ENCODE measurements at regions of chr19 and their contacts with region 1.

Region 1: DNA sequence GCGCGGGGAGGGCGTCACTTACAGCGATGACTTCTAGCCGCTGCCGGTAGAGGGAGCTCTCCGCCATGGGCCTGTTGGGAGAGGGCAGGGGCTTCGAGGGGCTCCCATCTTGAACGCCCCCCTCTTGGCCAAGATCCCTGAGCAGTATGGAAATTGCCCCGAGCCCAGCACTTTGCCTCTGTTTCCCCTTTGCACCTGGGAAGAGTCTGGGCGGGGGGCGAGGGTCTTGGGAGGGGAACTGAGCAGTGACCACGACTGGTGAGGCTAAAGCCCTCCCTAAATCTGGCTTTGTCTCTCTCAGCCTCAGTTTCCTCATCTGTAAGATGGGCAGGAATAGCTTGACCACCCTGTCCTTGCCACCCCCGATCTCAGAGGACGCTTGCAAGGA is 2.8 kb downstream of the PALM3 start:
- DNase-seq: peak; percentile 67
- ATAC-seq: no peak
- H3K4me3 Mint-ChIP-seq: no peak overlapping the region
- H3K27ac Mint-ChIP-seq: no peak overlapping the region
- H3K4me1 Mint-ChIP-seq: peaks cover 14% of the 10 kb centered on the region
- H3K27me3 Mint-ChIP-seq: peaks cover 46% of the 10 kb centered on the region

Region 2: GRCh38 chr19:13872695-13873389 is 186.2 kb before region 1 on chr19:
- CTCF ChIA-PET with region 1: interaction called, 13 read pairs
- POLR2A ChIA-PET with region 1: no interaction called
- DNase-seq: peak; percentile 64
- ATAC-seq: peak; percentile 95
- H3K4me3 Mint-ChIP-seq: peak overlapping the region; percentile 62
- H3K27ac Mint-ChIP-seq: no peak overlapping the region
- H3K4me1 Mint-ChIP-seq: peaks cover 11% of the 10 kb centered on the region
- H3K27me3 Mint-ChIP-seq: peaks cover 5% of the 10 kb centered on the region

Region 3: DNA sequence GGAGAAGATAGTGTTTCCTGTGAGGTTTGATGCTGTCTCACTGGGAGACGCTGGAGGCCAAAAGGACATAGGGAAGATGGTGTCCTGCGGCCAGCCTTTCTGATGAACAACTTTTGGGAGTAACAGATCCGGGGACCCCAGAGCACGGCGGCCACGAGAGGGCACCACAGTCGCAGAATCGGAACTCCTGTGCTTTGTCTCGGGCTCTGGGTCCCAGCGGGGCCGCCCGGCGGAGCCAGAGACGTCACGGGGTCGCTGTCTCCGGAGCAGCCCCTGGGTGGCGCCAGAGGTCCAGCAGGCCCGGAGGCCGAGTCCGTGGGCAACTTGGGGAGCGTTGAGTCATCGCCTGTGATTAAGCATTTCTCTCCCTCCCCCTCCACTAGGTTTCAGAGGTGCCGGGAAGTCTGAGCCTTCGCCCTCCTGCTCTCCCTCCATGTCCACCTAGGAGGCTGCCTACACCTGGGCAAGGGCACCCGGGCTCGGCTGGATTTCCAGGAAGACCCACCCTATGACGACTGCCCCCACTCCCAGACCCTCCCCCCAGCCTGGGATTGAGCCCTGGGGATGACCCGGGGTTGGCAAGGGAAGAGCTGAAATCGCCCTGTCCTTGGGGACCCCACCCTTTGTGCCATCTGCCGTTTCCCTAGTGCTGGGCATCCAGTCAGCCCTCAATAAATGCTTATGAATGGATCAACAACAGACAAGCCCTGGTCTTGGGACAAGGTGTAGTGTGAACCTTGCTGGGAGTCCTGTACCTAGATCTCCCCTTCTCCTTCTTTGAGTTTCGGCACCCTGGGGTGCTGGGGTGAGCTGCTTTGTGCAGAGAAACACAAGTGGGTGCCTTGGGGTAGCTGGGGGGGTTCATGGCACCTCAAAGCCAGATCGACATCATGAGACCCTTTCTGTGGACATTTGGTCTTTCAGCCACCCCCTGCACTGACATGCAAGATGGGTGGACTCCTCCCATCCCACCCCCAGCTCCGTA is 178.7 kb before region 1 on chr19:
- CTCF ChIA-PET with region 1: interaction called, 24 read pairs
- POLR2A ChIA-PET with region 1: no interaction called
- DNase-seq: peak; percentile 99
- ATAC-seq: peak; percentile 96
- H3K4me3 Mint-ChIP-seq: peak overlapping the region; percentile 54
- H3K27ac Mint-ChIP-seq: peak overlapping the region; percentile 64
- H3K4me1 Mint-ChIP-seq: peaks cover 45% of the 10 kb centered on the region
- H3K27me3 Mint-ChIP-seq: peaks cover 8% of the 10 kb centered on the region

Region 4: DNA sequence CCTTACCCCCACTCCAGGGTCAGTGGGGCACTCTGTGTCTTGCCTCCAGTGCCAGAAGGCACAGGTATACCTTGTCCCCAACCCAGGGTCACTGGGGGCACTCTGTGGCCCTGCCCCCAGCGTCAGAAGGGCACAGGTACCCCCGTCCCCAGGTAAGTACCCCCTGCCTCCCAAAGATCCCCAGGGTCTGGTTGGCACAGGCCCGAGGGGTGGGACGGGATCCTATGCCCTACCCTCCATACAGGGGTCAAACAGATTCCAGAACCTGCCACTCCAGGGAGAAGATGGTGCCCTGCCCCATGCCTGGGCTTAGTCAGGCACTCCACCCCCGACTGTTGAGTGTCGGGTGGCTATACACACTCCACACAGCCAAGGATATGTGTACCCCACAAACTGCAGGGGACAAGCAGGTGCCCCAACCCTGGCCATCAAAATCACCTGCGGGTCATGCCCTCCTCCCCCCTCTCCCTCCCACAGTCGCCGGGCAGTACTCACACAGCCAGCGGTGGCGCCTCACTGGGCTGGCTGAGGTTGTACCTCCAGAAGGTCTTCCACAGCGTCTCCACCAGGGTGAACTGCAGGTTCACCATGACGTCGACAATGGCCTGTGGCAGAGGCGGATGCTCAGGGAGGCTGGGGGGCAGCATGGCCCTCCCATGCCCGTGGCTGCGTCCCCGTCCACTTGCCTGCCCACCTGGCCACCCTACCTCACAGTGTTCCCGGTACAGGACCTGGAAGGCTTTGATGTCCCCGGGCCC is 93.0 kb before region 1 on chr19:
- CTCF ChIA-PET with region 1: no interaction called
- POLR2A ChIA-PET with region 1: no interaction called
- DNase-seq: no peak
- ATAC-seq: no peak
- H3K4me3 Mint-ChIP-seq: no peak overlapping the region
- H3K27ac Mint-ChIP-seq: no peak overlapping the region
- H3K4me1 Mint-ChIP-seq: no peaks in the 10 kb centered on the region
- H3K27me3 Mint-ChIP-seq: no peaks in the 10 kb centered on the region

Region 5: GRCh38 chr19:14006243-14006765 is 52.8 kb before region 1 on chr19 and contains the start of gene RFX1:
- CTCF ChIA-PET with region 1: interaction called, 11 read pairs
- POLR2A ChIA-PET with region 1: no interaction called
- DNase-seq: peak; percentile 100
- ATAC-seq: peak; percentile 80
- H3K4me3 Mint-ChIP-seq: peak within 1 kb of the TSS; percentile 88
- H3K27ac Mint-ChIP-seq: peak within 1 kb of the TSS; percentile 98
- H3K4me1 Mint-ChIP-seq: peaks cover 43% of the 10 kb centered on the region
- H3K27me3 Mint-ChIP-seq: no peaks in the 10 kb centered on the region
- total RNA-seq, gene RFX1: 15.9 to 17.7 TPM

Region 6: GRCh38 chr19:14048443-14049153 is 10.5 kb before region 1 on chr19:
- CTCF ChIA-PET with region 1: interaction called, 36 read pairs
- POLR2A ChIA-PET with region 1: no interaction called
- DNase-seq: peak; percentile 78
- ATAC-seq: peak; percentile 71
- H3K4me3 Mint-ChIP-seq: no peak overlapping the region
- H3K27ac Mint-ChIP-seq: no peak overlapping the region
- H3K4me1 Mint-ChIP-seq: peaks cover 7% of the 10 kb centered on the region
- H3K27me3 Mint-ChIP-seq: no peaks in the 10 kb centered on the region

Region 7: GRCh38 chr19:14073261-14073924 is 14.3 kb after region 1 on chr19:
- CTCF ChIA-PET with region 1: interaction called, 87 read pairs
- POLR2A ChIA-PET with region 1: interaction called, 5 read pairs
- DNase-seq: peak; percentile 80
- ATAC-seq: peak; percentile 78
- H3K4me3 Mint-ChIP-seq: peak overlapping the region; percentile 88
- H3K27ac Mint-ChIP-seq: peak overlapping the region; percentile 80
- H3K4me1 Mint-ChIP-seq: peaks cover 30% of the 10 kb centered on the region
- H3K27me3 Mint-ChIP-seq: peaks cover 2% of the 10 kb centered on the region

Region 8: GRCh38 chr19:14081325-14082093 is 22.4 kb after region 1 on chr19:
- CTCF ChIA-PET with region 1: interaction called, 13 read pairs
- POLR2A ChIA-PET with region 1: no interaction called
- DNase-seq: peak; percentile 100
- ATAC-seq: peak; percentile 96
- H3K4me3 Mint-ChIP-seq: peak overlapping the region; percentile 92
- H3K27ac Mint-ChIP-seq: peak overlapping the region; percentile 92
- H3K4me1 Mint-ChIP-seq: peaks cover 18% of the 10 kb centered on the region
- H3K27me3 Mint-ChIP-seq: no peaks in the 10 kb centered on the region

Measured in activated CD8-positive, alpha-beta T cell treated with anti-CD3 and anti-CD28 coated beads, Interleukin-2, amount 10 ng/mL, durations not matched to agents 7 days and 5 days (primary cell).